A673 (cell line): ENCODE measurements at regions of chr4 and their contacts with region 1.

Region 1: DNA sequence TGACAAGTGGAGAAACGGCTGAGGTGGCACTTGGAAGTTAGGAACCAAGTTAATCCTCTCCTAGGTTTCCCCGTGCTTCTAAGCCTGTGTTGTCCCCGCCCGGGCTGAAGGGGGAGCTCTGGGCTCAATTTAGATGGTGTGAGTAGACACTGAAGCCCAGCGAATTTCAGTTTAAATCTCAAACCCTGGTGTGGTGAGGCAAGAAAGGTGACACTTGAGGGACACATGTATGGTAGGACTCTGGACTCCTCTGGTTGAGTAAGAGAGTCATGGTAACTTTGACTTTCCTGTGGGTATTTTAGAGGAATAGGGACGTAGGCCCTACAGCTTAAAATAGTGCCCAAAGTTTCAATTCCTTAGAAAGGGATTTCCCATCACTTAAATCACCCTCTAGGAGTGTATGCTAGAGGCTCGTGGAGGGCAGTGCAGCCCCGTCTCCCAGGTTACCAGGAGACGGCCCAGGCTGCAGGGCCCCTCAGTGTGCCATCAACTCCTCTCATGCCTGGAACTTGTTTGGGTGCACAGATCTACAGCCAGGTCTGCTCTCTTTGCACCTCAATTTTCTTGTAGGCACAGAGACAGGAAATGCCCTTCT is 24.0 kb downstream of the HAND2 start:
- DNase-seq: peak; percentile 89
- H3K4me3 ChIP-seq: no peak overlapping the region
- H3K27ac ChIP-seq: no peak overlapping the region
- H3K4me1 ChIP-seq: peaks cover 9% of the 10 kb centered on the region
- H3K27me3 ChIP-seq: no peaks in the 10 kb centered on the region
- CTCF ChIP-seq: peak; percentile 90

Region 2: GRCh38 chr4:173748353-173748752 is 242.3 kb after region 1 on chr4:
- CTCF ChIA-PET with region 1: interaction called, 5 read pairs
- POLR2A ChIA-PET with region 1: no interaction called
- intact Hi-C with region 1: loop called (anchors 2 kb)
- DNase-seq: peak; percentile 61
- H3K4me3 ChIP-seq: no peak overlapping the region
- H3K27ac ChIP-seq: no peak overlapping the region
- H3K4me1 ChIP-seq: peaks cover 30% of the 10 kb centered on the region
- H3K27me3 ChIP-seq: no peaks in the 10 kb centered on the region
- CTCF ChIP-seq: peak; percentile 53

Region 3: DNA sequence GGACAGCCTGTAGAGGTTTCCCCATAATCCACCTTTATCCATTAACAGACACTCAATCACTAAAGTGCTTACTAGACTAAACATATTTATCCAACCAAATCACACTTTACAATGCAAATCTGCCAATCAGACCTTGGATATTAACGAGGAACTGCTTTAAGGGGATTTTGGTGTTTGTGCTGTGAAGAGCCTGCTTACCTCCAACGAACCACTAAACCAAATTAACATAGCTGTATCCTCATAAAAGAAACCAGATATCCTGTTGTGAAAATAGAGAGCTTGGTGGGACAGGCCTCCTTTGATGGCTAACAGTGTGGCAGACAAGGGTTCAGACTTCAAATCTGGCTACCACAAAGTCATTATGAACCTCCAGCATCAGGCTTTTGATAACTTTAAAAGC is 276.6 kb after region 1 on chr4:
- CTCF ChIA-PET with region 1: no interaction called
- POLR2A ChIA-PET with region 1: no interaction called
- intact Hi-C with region 1: no loop called
- DNase-seq: peak; percentile 17
- H3K4me3 ChIP-seq: no peak overlapping the region
- H3K27ac ChIP-seq: no peak overlapping the region
- H3K4me1 ChIP-seq: peaks cover 4% of the 10 kb centered on the region
- H3K27me3 ChIP-seq: no peaks in the 10 kb centered on the region
- CTCF ChIP-seq: no peak

Region 4: GRCh38 chr4:173990126-173990868 is 484.3 kb after region 1 on chr4:
- CTCF ChIA-PET with region 1: interaction called, 3 read pairs
- POLR2A ChIA-PET with region 1: no interaction called
- intact Hi-C with region 1: loop called (anchors 2 kb)
- DNase-seq: peak; percentile 79
- H3K4me3 ChIP-seq: no peak overlapping the region
- H3K27ac ChIP-seq: peak overlapping the region; percentile 65
- H3K4me1 ChIP-seq: peaks cover 31% of the 10 kb centered on the region
- H3K27me3 ChIP-seq: no peaks in the 10 kb centered on the region
- CTCF ChIP-seq: peak; percentile 83

Region 5: GRCh38 chr4:174120446-174121295 is 614.6 kb after region 1 on chr4:
- CTCF ChIA-PET with region 1: interaction called, 4 read pairs
- POLR2A ChIA-PET with region 1: no interaction called
- intact Hi-C with region 1: loop called (anchors 1 kb)
- DNase-seq: peak; percentile 92
- H3K4me3 ChIP-seq: peak overlapping the region; percentile 46
- H3K27ac ChIP-seq: peak overlapping the region; percentile 11
- H3K4me1 ChIP-seq: peaks cover 22% of the 10 kb centered on the region
- H3K27me3 ChIP-seq: no peaks in the 10 kb centered on the region
- CTCF ChIP-seq: peak; percentile 68

Region 6: DNA sequence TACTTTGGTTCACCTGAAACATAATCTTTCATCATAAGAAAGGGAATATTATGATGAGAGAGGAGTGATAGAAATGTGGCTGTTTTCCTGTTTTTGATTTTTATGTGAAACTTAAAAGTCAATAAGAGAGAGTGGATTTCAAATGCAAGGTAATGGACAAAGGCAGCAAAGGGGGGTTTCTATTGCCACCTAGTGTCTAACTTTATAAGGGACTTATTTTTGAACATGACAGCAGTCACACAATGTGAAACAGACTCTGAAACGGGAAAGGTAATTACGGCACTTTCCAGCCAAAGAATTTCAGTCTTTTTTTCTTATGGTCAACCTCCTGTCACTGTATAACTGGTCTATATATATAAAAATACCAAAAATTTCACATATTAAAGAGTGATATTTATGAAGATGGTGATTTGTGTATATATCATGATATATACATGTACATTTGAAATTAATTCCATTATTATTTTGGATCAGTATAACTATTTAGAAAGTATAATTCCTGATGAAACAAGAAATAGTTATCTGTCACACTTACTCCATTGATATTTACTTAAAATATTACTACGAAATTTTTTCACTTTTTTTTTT is 650.3 kb after region 1 on chr4:
- CTCF ChIA-PET with region 1: no interaction called
- POLR2A ChIA-PET with region 1: no interaction called
- intact Hi-C with region 1: loop called (anchors 1 kb)
- DNase-seq: peak; percentile 87
- H3K4me3 ChIP-seq: peak overlapping the region; percentile 17
- H3K27ac ChIP-seq: no peak overlapping the region
- H3K4me1 ChIP-seq: peaks cover 53% of the 10 kb centered on the region
- H3K27me3 ChIP-seq: no peaks in the 10 kb centered on the region
- CTCF ChIP-seq: peak; percentile 83

Region 7: DNA sequence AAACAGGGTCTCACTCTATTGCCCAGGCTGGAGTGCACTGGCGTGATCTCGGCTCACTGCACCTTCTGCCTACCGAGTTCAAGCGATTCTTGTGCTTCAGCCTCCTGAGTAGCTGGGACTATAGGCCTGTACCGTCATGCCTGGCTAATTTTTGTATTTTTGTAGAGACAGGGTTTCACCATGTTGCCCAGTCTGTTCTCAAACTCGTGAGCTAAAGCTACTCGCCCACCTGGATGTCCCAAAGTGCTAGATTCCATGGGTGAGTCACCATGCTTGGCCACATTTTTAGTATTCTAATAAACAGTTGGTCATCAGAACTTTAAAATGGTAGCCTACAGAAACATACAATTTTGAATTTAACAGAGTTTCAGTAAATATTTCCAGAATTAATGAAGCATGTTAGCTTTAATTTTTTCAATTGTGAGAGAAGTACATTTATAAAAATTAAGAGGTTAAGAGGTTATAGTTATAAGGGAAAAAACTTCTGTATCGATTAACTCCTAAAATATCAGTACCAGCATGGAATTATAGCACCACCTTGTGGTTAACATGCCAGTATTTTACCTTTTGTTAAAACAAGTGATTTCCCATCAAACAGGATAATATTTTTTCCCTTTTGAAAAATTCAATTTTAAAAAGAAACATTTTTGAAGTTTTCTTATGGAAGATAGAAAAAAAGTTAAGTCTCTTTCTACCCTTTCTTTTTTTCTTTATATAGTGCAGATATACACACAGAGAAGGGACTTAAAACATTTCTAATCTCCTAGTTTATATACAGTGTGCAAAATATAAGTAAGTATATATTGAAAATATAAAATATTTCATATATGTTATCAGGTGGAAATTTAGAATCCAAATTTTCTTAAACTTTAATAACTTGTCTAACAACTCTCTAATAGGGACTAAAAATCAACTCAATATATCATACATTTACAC is 813.1 kb after region 1 on chr4:
- CTCF ChIA-PET with region 1: no interaction called
- POLR2A ChIA-PET with region 1: no interaction called
- intact Hi-C with region 1: loop called (anchors 2 kb)
- DNase-seq: peak; percentile 55
- H3K4me3 ChIP-seq: no peak overlapping the region
- H3K27ac ChIP-seq: no peak overlapping the region
- H3K4me1 ChIP-seq: peaks cover 35% of the 10 kb centered on the region
- H3K27me3 ChIP-seq: no peaks in the 10 kb centered on the region
- CTCF ChIP-seq: peak; percentile 83